ENCODE measurements at regions of chr9 and their contacts with region 1.

Region 1: DNA sequence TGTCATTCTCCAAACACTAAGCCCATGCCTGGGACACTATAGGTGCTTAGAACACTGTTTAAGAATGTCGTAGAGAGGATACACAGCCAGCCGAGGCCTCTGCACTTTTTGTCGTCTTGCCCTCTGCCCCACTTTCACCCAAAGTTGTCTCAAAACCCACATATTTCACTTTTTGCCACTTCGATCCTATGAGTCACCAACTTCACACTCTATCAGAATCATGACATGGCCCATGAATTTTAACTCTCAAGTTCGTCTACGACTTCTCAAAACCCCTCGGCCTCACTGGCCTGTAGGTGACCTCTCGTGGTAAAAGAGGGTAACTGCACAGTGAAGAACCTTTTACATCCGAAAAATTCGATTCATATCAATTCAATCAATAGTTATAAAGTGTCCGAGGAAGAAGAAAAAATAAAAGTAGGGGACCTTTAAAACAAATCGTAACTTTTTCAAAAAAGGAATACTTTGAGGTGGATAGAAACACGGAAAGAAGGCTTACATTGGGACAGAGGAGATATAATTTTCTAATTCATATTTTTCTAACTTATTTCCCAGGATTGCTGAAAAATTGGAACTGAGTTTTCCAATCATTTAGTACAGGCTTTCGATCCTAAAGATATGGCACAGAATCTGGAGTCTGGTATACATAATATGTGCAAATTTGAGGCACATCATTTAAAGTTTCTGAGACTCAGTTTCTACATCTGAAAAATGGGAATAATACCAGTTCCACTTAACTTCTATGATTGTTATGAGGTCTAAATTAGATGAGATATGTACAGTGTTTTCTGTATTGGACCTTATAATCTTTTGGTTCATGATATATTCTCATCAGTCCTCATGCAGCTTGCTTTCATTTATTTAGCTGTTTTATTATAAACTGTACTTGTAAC is 122.6 kb downstream of the APBA1 start:
- DNase-seq: peak; percentile 44
- H3K4me3 ChIP-seq: no peak overlapping the region
- H3K27ac ChIP-seq: no peak overlapping the region
- H3K4me1 ChIP-seq: no peaks in the 10 kb centered on the region
- H3K27me3 ChIP-seq: no peaks in the 10 kb centered on the region
- CTCF ChIP-seq: peak; percentile 78 to 87 (median 78)
- POLR2A ChIP-seq: no peak

Region 2: GRCh38 chr9:69295872-69296552 is 253.5 kb before region 1 on chr9:
- intact Hi-C with region 1: no loop called
- DNase-seq: peak; percentile 50
- H3K4me3 ChIP-seq: no peak overlapping the region
- H3K27ac ChIP-seq: no peak overlapping the region
- H3K4me1 ChIP-seq: peaks cover 7% of the 10 kb centered on the region
- H3K27me3 ChIP-seq: no peaks in the 10 kb centered on the region
- CTCF ChIP-seq: no peak
- POLR2A ChIP-seq: no peak

Region 3: GRCh38 chr9:69421908-69422801 is 127.4 kb before region 1 on chr9:
- intact Hi-C with region 1: loop called (anchors 5 kb)
- DNase-seq: peak; percentile 74
- H3K4me3 ChIP-seq: no peak overlapping the region
- H3K27ac ChIP-seq: no peak overlapping the region
- H3K4me1 ChIP-seq: no peaks in the 10 kb centered on the region
- H3K27me3 ChIP-seq: no peaks in the 10 kb centered on the region
- CTCF ChIP-seq: peak; percentile 83 to 91 (median 86)
- POLR2A ChIP-seq: no peak

Measured in testis (tissue), 5 donors.